ENCODE measurements at regions of chr7 and their contacts with region 1.

Region 1: DNA sequence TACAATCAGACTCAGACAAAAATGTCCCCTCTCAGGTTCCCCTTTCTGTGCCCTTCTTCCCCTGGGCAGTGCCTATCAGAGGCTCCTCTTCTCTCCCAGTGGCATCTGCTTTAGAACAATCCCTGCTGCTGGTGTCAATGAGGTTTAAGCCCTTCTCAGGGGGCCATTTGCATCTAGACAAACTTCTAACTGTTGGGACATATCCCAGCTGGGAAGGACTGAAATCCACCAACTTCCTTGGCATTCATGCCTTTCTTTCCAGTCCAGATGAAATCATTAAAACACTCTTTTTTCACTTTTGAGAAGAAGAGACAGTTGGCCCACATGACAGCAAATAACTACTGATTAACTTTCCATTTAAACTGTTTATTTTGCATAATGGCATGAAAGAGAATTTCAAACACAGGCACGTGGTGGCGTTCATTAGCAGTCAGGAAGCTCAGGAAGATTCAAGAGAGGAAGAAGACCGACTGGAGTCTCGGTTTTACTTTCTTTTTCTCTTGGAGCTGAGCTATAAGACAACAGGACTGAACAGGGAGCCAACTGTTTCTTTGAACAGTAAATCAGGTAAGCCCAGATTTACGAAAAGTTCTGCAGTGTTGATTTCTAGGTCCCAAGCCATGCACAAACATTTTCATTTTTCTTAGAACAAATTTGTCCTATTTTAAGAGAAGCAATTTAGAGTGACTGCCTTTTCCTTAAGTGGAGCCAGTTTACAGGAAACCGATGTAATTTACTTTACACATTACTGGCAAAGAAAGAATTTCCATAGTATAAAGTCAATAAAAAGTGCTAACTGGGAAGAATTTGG is at the start of gene GIMAP2:
- DNase-seq: peak in 1 of 2 donors; percentile 78
- ATAC-seq: peak; percentile 78 to 88 (median 79)
- H3K4me3 ChIP-seq: peak within 1 kb of the TSS; percentile 92
- H3K4me3 Mint-ChIP-seq: peak within 1 kb of the TSS; percentile 83
- H3K27ac ChIP-seq: peak within 1 kb of the TSS; percentile 96
- H3K27ac Mint-ChIP-seq: peak within 1 kb of the TSS; percentile 97 to 99
- H3K4me1 ChIP-seq: peaks cover 55% of the 10 kb centered on the region
- H3K4me1 Mint-ChIP-seq: peaks cover 89 to 97% of the 10 kb centered on the region in 2 donors
- H3K27me3 ChIP-seq: no peaks in the 10 kb centered on the region
- H3K27me3 Mint-ChIP-seq: no peaks in the 10 kb centered on the region
- CTCF ChIP-seq: no peak
- total RNA-seq, gene GIMAP2: 47.5 to 77.5 (median 61.0) TPM

Region 2: DNA sequence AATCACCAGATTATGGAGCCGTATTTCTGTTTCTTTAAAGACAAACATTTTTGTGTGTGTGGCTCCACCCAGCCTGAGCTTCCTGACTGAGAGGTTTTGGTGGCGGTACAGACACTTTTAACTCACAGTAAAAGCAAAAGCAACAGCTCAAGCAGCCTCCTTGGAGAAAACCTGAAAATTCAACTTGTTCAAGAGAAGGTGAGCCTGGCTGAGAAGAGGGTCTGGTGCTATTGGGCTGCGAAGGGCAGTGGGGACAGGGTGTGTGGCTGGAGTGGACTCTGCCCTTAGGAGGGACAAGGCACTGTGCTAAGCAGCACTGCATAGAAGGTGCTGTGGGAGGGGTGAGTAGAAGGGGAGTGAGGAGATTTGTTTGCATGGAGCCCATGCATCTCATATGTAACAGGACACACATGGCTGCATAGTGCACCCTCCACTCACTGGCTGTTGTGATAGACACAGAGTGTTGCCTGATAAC is 170.6 kb before region 1 on chr7 and contains the start of gene GIMAP7:
- intact Hi-C with region 1: loop called (anchors 5 kb)
- DNase-seq: peak; percentile 46 to 83
- ATAC-seq: peak; percentile 74 to 84 (median 81)
- H3K4me3 ChIP-seq: peak within 1 kb of the TSS; percentile 83
- H3K4me3 Mint-ChIP-seq: peak within 1 kb of the TSS; percentile 100
- H3K27ac ChIP-seq: peak within 1 kb of the TSS; percentile 73
- H3K27ac Mint-ChIP-seq: peak within 1 kb of the TSS; percentile 96 to 100
- H3K4me1 ChIP-seq: peaks cover 34% of the 10 kb centered on the region
- H3K4me1 Mint-ChIP-seq: peaks cover 58 to 65% of the 10 kb centered on the region in 2 donors
- H3K27me3 ChIP-seq: no peaks in the 10 kb centered on the region
- H3K27me3 Mint-ChIP-seq: no peaks in the 10 kb centered on the region
- CTCF ChIP-seq: no peak
- total RNA-seq, gene GIMAP7: 66.3 to 100 (median 67.6) TPM

Region 3: DNA sequence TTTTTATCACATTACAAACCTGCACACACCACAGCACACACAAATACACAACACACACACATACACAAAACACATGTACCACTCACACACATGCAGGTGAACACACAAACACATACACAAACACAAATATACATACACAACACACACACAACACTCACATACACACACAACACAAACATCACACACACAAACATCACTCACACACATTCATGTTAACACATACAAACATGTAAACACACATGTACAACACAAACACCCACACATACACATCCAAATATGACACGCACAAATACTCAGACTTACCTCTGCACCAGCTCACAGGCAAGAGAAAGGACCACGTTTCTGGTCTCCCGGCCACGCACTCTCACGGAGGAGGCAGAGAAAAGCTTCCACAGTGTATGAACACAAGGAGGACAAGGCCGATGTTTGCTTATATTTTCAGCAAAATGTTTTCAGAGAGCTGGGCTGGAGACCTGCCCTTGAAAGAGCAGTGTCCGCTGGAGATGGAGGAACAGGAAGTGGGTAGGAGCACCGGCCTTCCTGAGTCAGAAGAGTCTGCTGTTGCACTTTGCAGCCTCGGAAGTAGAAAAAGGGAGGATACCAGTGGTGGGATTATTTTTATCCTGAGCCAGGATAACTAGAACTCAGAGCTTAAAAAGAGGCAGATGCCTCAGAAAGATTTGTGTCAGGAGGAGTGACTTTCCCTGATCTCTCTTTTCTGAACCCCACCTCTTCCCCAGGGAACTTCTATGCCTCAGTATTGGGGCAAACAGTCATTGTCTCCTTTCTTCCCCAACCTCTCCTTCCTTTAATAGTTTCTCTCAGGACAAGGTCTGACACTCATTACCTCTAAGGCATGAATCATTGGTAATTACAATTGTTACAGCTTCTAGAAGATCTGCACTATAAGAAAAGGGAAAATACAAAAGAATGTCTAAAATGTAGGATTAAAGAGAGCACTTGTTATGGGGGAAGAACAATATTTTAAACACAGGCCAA is 53.3 kb before region 1 on chr7 and contains the start of gene GIMAP6:
- intact Hi-C with region 1: loop called (anchors 5 kb)
- DNase-seq: peak in 1 of 2 donors; percentile 68
- ATAC-seq: peak; percentile 66 to 76 (median 66)
- H3K4me3 ChIP-seq: peak within 1 kb of the TSS; percentile 61
- H3K4me3 Mint-ChIP-seq: peak within 1 kb of the TSS; percentile 86
- H3K27ac ChIP-seq: peak within 1 kb of the TSS; percentile 79
- H3K27ac Mint-ChIP-seq: peak within 1 kb of the TSS; percentile 72 to 93
- H3K4me1 ChIP-seq: peaks cover 52% of the 10 kb centered on the region
- H3K4me1 Mint-ChIP-seq: peaks cover 56 to 79% of the 10 kb centered on the region in 2 donors
- H3K27me3 ChIP-seq: no peaks in the 10 kb centered on the region
- H3K27me3 Mint-ChIP-seq: no peaks in the 10 kb centered on the region
- CTCF ChIP-seq: no peak
- total RNA-seq, gene GIMAP6: 39.7 to 100 (median 51.9) TPM

Region 4: GRCh38 chr7:150737265-150738055 is 52.0 kb after region 1 on chr7 and contains the start of gene GIMAP5:
- intact Hi-C with region 1: loop called (anchors 5 kb)
- DNase-seq: peak; percentile 51 to 71
- ATAC-seq: peak; percentile 85 to 88 (median 85)
- H3K4me3 ChIP-seq: peak within 1 kb of the TSS; percentile 84
- H3K4me3 Mint-ChIP-seq: peak within 1 kb of the TSS; percentile 91
- H3K27ac ChIP-seq: peak within 1 kb of the TSS; percentile 64
- H3K27ac Mint-ChIP-seq: peak within 1 kb of the TSS; percentile 86 to 91
- H3K4me1 ChIP-seq: peaks cover 35% of the 10 kb centered on the region
- H3K4me1 Mint-ChIP-seq: peaks cover 66 to 73% of the 10 kb centered on the region in 2 donors
- H3K27me3 ChIP-seq: no peaks in the 10 kb centered on the region
- H3K27me3 Mint-ChIP-seq: no peaks in the 10 kb centered on the region
- CTCF ChIP-seq: no peak
- total RNA-seq, gene GIMAP5: 29.2 to 64.1 (median 35.3) TPM